ENCODE measurements at regions of chr1 and their contacts with region 1.

Region 1: DNA sequence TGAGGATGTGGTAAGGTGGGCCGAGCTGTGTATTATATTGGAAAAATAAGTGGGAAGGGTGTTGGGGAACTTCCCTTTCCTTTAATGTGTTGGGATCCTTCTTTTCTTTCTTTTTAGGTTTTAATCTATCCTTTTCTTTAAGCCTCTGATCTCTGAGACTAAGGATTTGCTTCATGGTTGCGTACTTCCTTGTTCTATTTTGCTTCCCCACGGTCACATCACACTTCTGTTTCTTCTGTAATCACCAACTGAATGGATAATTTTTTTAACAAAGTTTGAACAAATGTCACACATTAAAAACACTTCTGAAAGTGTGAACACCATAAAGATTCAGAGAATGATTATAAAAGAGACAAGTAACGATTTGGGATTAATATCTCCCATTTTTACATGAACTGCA is 17.4 kb downstream of the DMRTA2 start:
- DNase-seq: no peak
- H3K4me3 ChIP-seq: no peak overlapping the region
- H3K27ac ChIP-seq: no peak overlapping the region
- H3K4me1 ChIP-seq: no peaks in the 10 kb centered on the region
- H3K27me3 ChIP-seq: no peaks in the 10 kb centered on the region
- CTCF ChIP-seq: no peak
- EP300 ChIP-seq: no peak
- POLR2A ChIP-seq: no peak
- RAD21 ChIP-seq: no peak

Region 2: GRCh38 chr1:50416553-50417453 is 11.0 kb after region 1 on chr1:
- CTCF ChIA-PET with region 1: interaction called, 10 read pairs
- POLR2A ChIA-PET with region 1: no interaction called
- DNase-seq: peak in 1 of 2 experiments; percentile 81
- H3K4me3 ChIP-seq: peak overlapping the region; percentile 19 to 58 (median 39); a peak in 6 of 8 replicates
- H3K27ac ChIP-seq: no peak overlapping the region
- H3K4me1 ChIP-seq: peaks cover 0 to 30% (median 17%) of the 10 kb centered on the region in 4 experiments; a peak in 5 of 7 replicates
- H3K27me3 ChIP-seq: peaks cover 89 to 97% (median 91%) of the 10 kb centered on the region in 4 experiments
- CTCF ChIP-seq: no peak
- EP300 ChIP-seq: no peak
- POLR2A ChIP-seq: no peak
- RAD21 ChIP-seq: no peak